ENCODE measurements at regions of chr7 and their contacts with region 1.

Region 1: DNA sequence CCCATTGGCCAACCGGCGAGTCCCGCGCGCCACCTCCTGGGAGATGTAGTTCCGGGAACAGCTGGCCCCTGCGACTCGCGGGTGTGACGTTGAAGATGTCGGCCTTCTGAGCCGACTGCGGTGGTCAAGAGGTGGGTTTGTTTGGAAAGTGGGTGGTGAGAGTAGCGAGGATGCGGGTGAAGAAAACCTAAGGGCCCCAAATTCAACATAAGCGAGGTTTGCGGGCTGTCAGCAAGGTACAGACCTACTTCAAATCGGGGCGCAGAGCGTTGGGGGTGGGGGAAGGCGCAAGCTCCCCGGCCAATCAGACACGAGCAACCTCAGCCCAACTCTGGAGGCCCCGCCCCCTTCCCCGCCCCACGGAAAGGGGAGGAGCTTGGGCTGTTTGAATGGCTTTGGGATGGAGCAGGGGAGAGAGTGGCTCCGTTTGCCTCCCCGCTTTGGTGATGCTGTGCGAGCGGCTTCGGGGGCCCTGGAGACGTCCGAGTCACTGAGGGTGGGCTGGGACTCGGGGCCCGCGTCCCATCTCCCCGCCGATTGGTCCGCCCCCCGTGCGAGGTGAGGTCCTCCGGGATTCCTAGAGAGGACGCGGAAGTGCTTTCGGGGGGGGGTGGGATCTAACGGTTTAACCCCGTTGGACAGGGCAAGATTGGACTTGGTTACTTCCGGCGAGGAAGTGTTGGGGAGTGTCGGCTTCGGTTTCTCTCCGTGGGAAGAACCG is at the start of gene ZKSCAN5:
- DNase-seq: peak; percentile 99
- ATAC-seq: peak; percentile 93 to 95 (median 94)
- H3K4me3 ChIP-seq: peak within 1 kb of the TSS; percentile 92
- H3K27ac ChIP-seq: peak within 1 kb of the TSS; percentile 99
- H3K4me1 ChIP-seq: peaks cover 33% of the 10 kb centered on the region
- H3K27me3 ChIP-seq: no peaks in the 10 kb centered on the region
- CTCF ChIP-seq: no peak
- total RNA-seq, gene ZKSCAN5: 7.3 to 9.6 (median 9.4) TPM

Region 2: GRCh38 chr7:99244939-99245338 is 259.8 kb before region 1 on chr7:
- intact Hi-C with region 1: no loop called
- DNase-seq: no peak
- ATAC-seq: no peak
- H3K4me3 ChIP-seq: no peak overlapping the region
- H3K27ac ChIP-seq: no peak overlapping the region
- H3K4me1 ChIP-seq: no peaks in the 10 kb centered on the region
- H3K27me3 ChIP-seq: peaks cover 0 to 3% (median 0%) of the 10 kb centered on the region in 3 donors
- CTCF ChIP-seq: no peak

Region 3: DNA sequence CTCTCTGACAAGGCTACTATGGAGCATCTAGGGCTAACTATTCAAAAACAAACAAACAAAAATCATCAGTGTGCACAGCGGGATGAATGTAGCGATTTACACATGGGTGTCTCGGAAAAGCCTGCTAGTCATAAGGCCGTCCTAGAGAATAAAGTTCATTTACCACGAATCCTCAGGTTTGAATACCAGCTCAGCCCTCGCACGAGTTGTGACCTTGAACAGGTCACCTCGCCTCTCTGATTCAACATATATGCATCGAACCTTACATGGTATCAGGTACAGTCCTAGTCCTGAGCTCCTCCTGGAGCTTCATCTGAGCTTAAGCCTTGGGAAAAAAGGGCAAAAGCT is 39.4 kb before region 1 on chr7:
- intact Hi-C with region 1: loop called in 1 of 2 experiments (anchors 5 kb)
- DNase-seq: no peak
- ATAC-seq: peak; percentile 12 to 36 (median 22)
- H3K4me3 ChIP-seq: peak overlapping the region; percentile 99
- H3K27ac ChIP-seq: peak overlapping the region; percentile 96
- H3K4me1 ChIP-seq: peaks cover 36% of the 10 kb centered on the region
- H3K27me3 ChIP-seq: no peaks in the 10 kb centered on the region
- CTCF ChIP-seq: no peak

Region 4: GRCh38 chr7:99551767-99552463 is 47.2 kb after region 1 on chr7 and contains the start of gene FAM200A:
- intact Hi-C with region 1: loop called in 1 of 2 experiments (anchors 5 kb)
- DNase-seq: peak; percentile 89 to 94
- ATAC-seq: peak; percentile 98 to 100 (median 99)
- H3K4me3 ChIP-seq: peak within 1 kb of the TSS; percentile 80
- H3K27ac ChIP-seq: peak within 1 kb of the TSS; percentile 88
- H3K4me1 ChIP-seq: peaks cover 21% of the 10 kb centered on the region
- H3K27me3 ChIP-seq: no peaks in the 10 kb centered on the region
- CTCF ChIP-seq: no peak
- total RNA-seq, gene FAM200A: 2.9 to 6.3 (median 4.4) TPM

Region 5: GRCh38 chr7:99558306-99559174 is 53.8 kb after region 1 on chr7 and contains the start of gene ZNF655:
- intact Hi-C with region 1: loop called (anchors 2 to 5 kb)
- DNase-seq: peak; percentile 94 to 96
- ATAC-seq: peak; percentile 92 to 96 (median 95)
- H3K4me3 ChIP-seq: peak within 1 kb of the TSS; percentile 78
- H3K27ac ChIP-seq: peak within 1 kb of the TSS; percentile 95
- H3K4me1 ChIP-seq: peaks cover 55% of the 10 kb centered on the region
- H3K27me3 ChIP-seq: no peaks in the 10 kb centered on the region
- CTCF ChIP-seq: no peak
- total RNA-seq, gene ZNF655: 30.9 to 43.8 (median 36.6) TPM

Region 6: GRCh38 chr7:99616359-99617191 is 111.8 kb after region 1 on chr7 and contains the start of gene ZSCAN25:
- intact Hi-C with region 1: loop called in 1 of 2 experiments (anchors 5 kb)
- DNase-seq: peak; percentile 89 to 94
- ATAC-seq: peak; percentile 97 to 98 (median 98)
- H3K4me3 ChIP-seq: peak within 1 kb of the TSS; percentile 97
- H3K27ac ChIP-seq: peak within 1 kb of the TSS; percentile 87
- H3K4me1 ChIP-seq: peaks cover 10% of the 10 kb centered on the region
- H3K27me3 ChIP-seq: no peaks in the 10 kb centered on the region
- CTCF ChIP-seq: peak; percentile 21
- total RNA-seq, gene ZSCAN25: 6.3 to 10.5 (median 7.0) TPM

Region 7: GRCh38 chr7:99694201-99694911 is 189.6 kb after region 1 on chr7:
- intact Hi-C with region 1: no loop called
- DNase-seq: no peak
- ATAC-seq: no peak
- H3K4me3 ChIP-seq: no peak overlapping the region
- H3K27ac ChIP-seq: no peak overlapping the region
- H3K4me1 ChIP-seq: no peaks in the 10 kb centered on the region
- H3K27me3 ChIP-seq: no peaks in the 10 kb centered on the region
- CTCF ChIP-seq: no peak